ENCODE measurements at regions of chr6 and their contacts with region 1.

Region 1: GRCh38 chr6:14711056-14711703 is 534.7 kb upstream of the JARID2 start:
- DNase-seq: peak; percentile 73
- H3K4me3 Mint-ChIP-seq: no peak overlapping the region
- H3K27ac Mint-ChIP-seq: peak overlapping the region; percentile 73
- H3K4me1 Mint-ChIP-seq: peaks cover 43% of the 10 kb centered on the region
- H3K27me3 Mint-ChIP-seq: no peaks in the 10 kb centered on the region

Region 2: DNA sequence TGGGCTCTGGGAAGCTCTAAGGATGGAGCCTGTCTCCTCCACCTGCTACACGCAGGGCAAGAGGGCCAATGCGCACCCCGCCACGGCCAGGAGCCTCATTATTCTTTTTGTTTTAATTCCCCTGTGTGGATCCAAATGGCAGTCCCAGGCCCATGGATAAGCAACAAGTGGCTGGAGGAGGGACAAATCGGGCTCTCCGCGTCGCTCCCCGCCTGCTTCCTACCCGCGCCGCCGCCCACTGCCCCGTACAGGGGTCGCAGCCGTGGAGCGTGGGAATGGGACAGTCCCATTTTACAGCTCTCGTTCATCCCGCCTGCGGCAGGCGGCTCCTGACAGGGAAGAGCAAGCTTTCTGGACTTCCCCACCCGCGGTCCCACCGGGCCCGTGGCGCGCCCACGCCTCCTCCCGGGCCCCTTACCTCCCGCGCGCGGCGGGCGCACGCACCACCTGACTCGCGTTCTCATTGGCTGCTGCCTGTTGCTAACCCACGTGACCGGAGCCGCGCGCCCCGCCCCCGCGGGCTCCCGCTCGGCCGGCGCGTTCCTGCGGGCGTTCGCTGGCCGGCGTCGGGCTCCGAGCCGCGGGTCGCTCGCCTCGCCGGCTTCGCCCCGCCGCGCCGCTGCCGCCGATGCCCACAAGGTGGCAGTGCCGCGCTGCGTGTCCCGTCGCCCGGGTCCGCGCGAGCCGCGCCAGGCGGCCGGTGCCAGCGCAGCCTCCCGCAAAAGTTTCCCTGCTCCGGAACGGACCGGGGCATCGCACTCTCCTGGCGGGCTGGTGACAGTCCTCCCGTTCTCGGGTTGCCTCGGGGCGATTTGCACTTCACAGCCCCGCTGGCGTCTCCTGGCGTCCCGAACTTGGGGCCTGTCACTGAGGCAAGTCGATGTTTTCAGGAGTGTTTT is 500.3 kb before region 1 on chr6:
- CTCF ChIA-PET with region 1: interaction called, 22 read pairs
- POLR2A ChIA-PET with region 1: interaction called, 7 read pairs
- DNase-seq: peak; percentile 93
- H3K4me3 Mint-ChIP-seq: peak overlapping the region; percentile 81
- H3K27ac Mint-ChIP-seq: peak overlapping the region; percentile 64
- H3K4me1 Mint-ChIP-seq: peaks cover 16% of the 10 kb centered on the region
- H3K27me3 Mint-ChIP-seq: no peaks in the 10 kb centered on the region

Region 3: DNA sequence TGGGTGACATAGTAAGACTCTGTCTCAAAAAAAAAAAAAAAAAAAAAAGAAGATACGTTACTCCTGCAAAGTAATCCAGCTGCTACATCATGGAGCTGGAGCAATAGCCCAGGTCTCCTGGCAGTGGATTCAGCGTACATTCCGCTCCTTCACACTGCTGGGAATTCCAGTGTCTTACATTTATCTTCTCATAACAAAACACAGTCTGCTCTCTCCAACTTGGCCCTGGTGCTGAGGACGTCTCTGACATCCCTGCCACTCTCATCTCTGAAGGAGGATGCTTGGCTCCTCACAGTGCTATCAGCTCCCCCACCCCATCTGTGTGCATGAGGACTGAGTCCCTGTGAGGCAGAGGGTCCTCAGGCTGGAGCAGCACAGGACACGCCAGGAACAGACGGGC is 63.8 kb before region 1 on chr6:
- CTCF ChIA-PET with region 1: no interaction called
- POLR2A ChIA-PET with region 1: no interaction called
- DNase-seq: no peak
- H3K4me3 Mint-ChIP-seq: no peak overlapping the region
- H3K27ac Mint-ChIP-seq: no peak overlapping the region
- H3K4me1 Mint-ChIP-seq: peaks cover 5% of the 10 kb centered on the region
- H3K27me3 Mint-ChIP-seq: no peaks in the 10 kb centered on the region

Region 4: GRCh38 chr6:14676064-14676463 is 35.1 kb before region 1 on chr6:
- CTCF ChIA-PET with region 1: no interaction called
- POLR2A ChIA-PET with region 1: no interaction called
- DNase-seq: no peak
- H3K4me3 Mint-ChIP-seq: no peak overlapping the region
- H3K27ac Mint-ChIP-seq: no peak overlapping the region
- H3K4me1 Mint-ChIP-seq: peaks cover 12% of the 10 kb centered on the region
- H3K27me3 Mint-ChIP-seq: no peaks in the 10 kb centered on the region

Region 5: DNA sequence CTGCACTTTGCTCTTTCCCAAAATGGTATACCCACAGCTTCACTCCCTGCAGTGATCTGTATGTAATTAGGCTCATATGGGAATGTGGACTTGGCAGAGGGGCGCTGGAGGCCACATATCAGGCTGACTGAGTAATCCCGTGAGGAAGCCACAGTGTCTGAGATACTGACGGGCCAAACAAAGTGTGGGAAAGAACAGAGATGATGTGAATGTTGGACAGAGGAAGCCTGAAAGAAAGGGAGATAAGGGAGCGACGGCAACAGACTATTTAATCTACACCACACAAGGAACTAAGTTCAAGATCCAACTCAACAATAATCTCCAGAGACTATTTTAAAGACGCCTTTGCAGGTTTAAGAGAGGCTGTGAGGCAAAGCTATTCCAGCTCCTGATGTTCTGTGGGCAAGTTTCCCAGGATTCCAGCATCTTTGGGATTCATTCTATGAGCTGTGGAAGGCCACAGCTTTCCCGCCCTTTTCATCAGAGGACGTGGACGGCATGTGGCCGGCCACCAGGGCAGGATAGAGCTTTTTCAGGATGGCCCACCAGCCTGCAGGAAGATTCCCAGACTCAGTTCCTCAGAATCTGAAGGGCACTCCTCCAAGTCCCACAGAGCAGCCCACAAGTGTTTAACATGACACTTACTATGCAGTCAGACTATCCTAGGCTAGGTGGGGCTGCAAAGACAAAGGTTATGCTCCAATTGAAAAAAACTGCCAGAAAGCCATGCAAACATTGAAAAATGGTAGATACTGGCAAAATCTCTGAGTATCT is 1812.6 kb after region 1 on chr6:
- CTCF ChIA-PET with region 1: no interaction called
- POLR2A ChIA-PET with region 1: no interaction called
- DNase-seq: no peak
- H3K4me3 Mint-ChIP-seq: no peak overlapping the region
- H3K27ac Mint-ChIP-seq: no peak overlapping the region
- H3K4me1 Mint-ChIP-seq: peaks cover 24% of the 10 kb centered on the region
- H3K27me3 Mint-ChIP-seq: no peaks in the 10 kb centered on the region